Activated CD4-positive, alpha-beta T cell treated with anti-CD3 and anti-CD28 coated beads for 36 hours (primary cell): ENCODE measurements at regions of chr12 and their contacts with region 1.

Region 1: DNA sequence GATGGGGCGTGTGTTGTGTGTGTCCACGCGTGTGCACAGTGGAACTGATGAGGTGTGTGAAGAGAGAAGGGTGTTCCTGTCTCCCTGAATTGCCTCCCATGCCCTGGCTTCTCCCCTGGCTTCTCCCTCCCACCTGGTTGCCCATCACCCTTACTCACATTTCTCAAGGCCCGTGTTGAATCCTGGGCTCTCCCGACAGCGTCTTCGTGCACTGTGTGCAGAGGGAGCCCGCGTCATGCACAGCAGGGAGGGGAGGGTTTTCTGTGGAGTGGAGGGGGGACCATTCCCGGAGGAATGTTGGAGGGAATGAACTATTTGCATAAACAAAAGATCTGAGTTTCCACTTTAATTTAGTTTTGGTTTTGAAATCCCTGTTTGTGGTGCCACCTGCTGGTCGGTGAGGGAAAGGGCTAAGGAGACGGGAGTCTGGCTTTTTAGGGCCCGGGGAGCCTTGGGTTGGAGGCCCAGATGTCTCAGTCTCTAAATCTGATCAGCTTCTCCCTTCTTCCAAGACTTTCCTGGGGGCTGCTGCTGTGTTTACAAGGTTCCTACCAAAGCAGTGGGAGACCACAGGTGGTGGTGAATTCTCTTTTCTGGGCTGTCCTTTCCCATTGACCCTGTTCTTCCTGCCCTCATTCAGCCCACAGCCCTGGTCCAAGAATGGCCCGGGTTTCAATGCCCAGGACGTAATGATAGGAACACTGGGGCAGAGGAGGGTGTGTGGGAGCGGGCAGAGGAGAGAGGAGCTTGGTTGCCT is at the start of gene C1R:
- DNase-seq: peak; percentile 85
- ATAC-seq: peak; percentile 86
- H3K4me3 Mint-ChIP-seq: peak within 1 kb of the TSS; percentile 59
- H3K27ac Mint-ChIP-seq: peak within 1 kb of the TSS; percentile 80
- H3K4me1 Mint-ChIP-seq: peaks cover 6% of the 10 kb centered on the region
- H3K27me3 Mint-ChIP-seq: no peaks in the 10 kb centered on the region
- total RNA-seq, gene C1R: 1.4 to 2.2 TPM

Region 2: DNA sequence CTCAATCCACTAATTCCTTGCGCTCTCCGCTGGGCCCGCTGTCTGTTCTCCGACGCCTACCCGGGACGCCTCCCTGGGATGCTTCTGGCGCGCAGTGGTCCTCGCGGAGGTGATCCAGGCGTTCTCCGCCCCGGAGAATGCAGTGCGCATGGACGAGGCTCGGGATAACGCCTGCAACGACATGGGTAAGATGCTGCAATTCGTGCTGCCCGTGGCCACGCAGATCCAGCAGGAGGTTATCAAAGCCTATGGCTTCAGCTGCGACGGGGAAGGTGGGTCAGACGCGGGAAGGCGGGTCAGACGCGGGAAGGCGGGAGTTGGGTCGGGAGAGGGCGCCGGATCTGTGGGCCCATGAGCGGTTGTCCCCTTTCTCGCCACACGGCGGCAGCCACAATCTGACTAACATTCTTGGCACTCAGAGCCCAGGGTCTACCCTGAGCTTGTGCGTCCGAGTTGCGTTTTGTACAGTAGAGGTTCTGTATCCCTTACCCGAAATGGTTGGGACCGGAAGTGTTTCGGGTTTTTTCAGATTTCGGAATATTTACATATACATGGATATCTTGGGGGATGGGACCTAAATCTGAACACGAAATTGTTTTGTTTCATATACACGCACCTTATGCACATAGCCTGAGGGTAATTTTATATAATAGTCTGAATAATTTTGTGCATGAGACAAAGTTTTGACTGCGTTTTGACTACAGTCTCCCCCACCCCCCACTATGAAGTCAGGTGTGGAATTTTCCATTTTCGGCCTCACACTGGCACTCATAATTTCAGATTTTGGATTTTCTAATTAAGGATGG is 147.8 kb before region 1 on chr12:
- CTCF ChIA-PET with region 1: interaction called, 5 read pairs
- POLR2A ChIA-PET with region 1: no interaction called
- intact Hi-C with region 1: loop called (anchors 1 kb)
- DNase-seq: peak; percentile 94
- ATAC-seq: peak; percentile 54
- H3K4me3 Mint-ChIP-seq: peak overlapping the region; percentile 81
- H3K27ac Mint-ChIP-seq: peak overlapping the region; percentile 97
- H3K4me1 Mint-ChIP-seq: peaks cover 59% of the 10 kb centered on the region
- H3K27me3 Mint-ChIP-seq: no peaks in the 10 kb centered on the region

Region 3: DNA sequence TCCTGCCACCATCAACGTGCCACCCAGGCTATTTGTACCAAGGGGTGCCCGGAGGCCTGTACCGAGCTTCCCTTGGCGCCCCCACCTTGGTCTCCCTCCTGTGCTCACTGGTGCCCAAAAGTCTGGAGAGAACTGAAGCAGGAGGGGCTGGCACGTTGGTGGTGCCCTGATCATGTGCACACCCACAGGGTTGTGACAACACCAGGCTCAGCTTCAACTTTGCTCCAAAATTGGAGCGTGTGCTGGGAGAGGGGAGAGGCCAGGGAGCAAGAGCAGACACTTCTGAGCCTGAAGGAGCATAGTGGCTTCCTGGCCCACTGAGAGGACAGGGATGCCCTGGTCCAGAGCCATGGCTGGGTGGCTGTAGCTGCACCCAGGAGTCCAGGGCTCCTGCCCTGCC is 61.1 kb before region 1 on chr12:
- CTCF ChIA-PET with region 1: no interaction called
- POLR2A ChIA-PET with region 1: no interaction called
- intact Hi-C with region 1: loop called in 1 of 2 experiments (anchors 5 kb)
- DNase-seq: no peak
- ATAC-seq: no peak
- H3K4me3 Mint-ChIP-seq: no peak overlapping the region
- H3K27ac Mint-ChIP-seq: no peak overlapping the region
- H3K4me1 Mint-ChIP-seq: no peaks in the 10 kb centered on the region
- H3K27me3 Mint-ChIP-seq: no peaks in the 10 kb centered on the region

Region 4: DNA sequence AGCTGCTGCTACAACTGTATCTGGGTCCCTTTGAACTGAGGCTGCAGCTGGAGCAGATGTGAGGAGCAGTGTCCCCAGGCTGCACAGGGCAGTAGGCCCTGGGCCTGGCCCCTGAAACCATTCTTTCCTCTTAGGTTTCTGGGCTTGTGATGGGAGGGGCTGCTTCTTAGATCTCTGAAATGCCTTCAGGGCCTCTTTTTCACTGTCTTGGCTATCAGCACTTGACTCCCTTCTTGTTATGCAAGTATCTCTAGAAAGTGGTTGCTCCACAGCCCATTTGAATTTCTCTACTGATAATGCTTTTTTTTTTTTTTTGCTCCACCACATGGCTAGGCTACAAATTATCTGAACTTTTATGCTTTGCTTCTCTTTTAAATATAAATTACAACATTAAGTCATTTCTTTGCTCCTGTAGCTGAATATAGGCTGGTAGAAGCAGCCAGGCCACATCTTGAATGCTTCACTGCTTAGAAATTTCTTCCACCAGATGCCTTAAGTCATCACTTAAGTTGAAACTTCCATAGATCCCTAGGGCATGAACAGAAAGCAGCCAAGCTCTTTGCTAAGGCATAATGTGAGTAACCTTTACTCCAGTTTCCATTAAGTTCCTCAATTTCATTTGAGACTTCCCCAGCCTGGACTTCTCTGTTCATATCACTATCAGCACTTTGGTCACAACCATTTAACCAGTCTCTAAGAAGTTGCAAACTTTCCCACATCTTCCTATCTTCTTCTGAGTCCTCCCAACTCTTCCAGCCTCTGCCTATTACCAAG is 252.6 kb after region 1 on chr12:
- CTCF ChIA-PET with region 1: no interaction called
- POLR2A ChIA-PET with region 1: no interaction called
- intact Hi-C with region 1: no loop called
- DNase-seq: no peak
- ATAC-seq: no peak
- H3K4me3 Mint-ChIP-seq: no peak overlapping the region
- H3K27ac Mint-ChIP-seq: no peak overlapping the region
- H3K4me1 Mint-ChIP-seq: peaks cover 13% of the 10 kb centered on the region
- H3K27me3 Mint-ChIP-seq: no peaks in the 10 kb centered on the region